ENCODE measurements at regions of chr9 and their contacts with region 1.

Region 1: GRCh38 chr9:4805191-4805918 is 12.6 kb downstream of the RCL1 start:
- DNase-seq: no peak
- H3K4me3 ChIP-seq: no peak overlapping the region
- H3K27ac ChIP-seq: no peak overlapping the region
- H3K4me1 ChIP-seq: peaks cover 0 to 8% (median 0%) of the 10 kb centered on the region in 4 experiments; a peak in 3 of 7 replicates
- H3K27me3 ChIP-seq: no peaks in the 10 kb centered on the region
- CTCF ChIP-seq: no peak
- EP300 ChIP-seq: no peak
- POLR2A ChIP-seq: no peak
- RAD21 ChIP-seq: no peak

Region 2: GRCh38 chr9:4792572-4793458 is 12.5 kb before region 1 on chr9 and contains the start of gene RCL1:
- CTCF ChIA-PET with region 1: interaction called, 6 read pairs
- POLR2A ChIA-PET with region 1: interaction called, 17 read pairs
- DNase-seq: peak; percentile 89 to 95
- H3K4me3 ChIP-seq: peak within 1 kb of the TSS; percentile 81 to 86 (median 84)
- H3K27ac ChIP-seq: peak within 1 kb of the TSS; percentile 76
- H3K4me1 ChIP-seq: peaks cover 0 to 13% (median 6%) of the 10 kb centered on the region in 4 experiments; a peak in 6 of 7 replicates
- H3K27me3 ChIP-seq: no peaks in the 10 kb centered on the region; a peak in 2 of 7 replicates
- CTCF ChIP-seq: no peak
- EP300 ChIP-seq: no peak; a peak in 1 of 3 replicates
- POLR2A ChIP-seq: peak; percentile 86 to 88
- RAD21 ChIP-seq: no peak
- total RNA-seq, gene RCL1: 29.5 and 29.7 TPM in 2 replicates

Region 3: GRCh38 chr9:4822057-4822456 is 16.7 kb after region 1 on chr9:
- CTCF ChIA-PET with region 1: no interaction called
- POLR2A ChIA-PET with region 1: no interaction called
- DNase-seq: no peak
- H3K4me3 ChIP-seq: no peak overlapping the region
- H3K27ac ChIP-seq: no peak overlapping the region
- H3K4me1 ChIP-seq: no peaks in the 10 kb centered on the region
- H3K27me3 ChIP-seq: no peaks in the 10 kb centered on the region
- CTCF ChIP-seq: no peak
- EP300 ChIP-seq: no peak
- POLR2A ChIP-seq: no peak
- RAD21 ChIP-seq: no peak